Heart left ventricle (tissue), 16 donors: ENCODE measurements at regions of chr1 and their contacts with region 1.

Region 1: GRCh38 chr1:164786980-164787833 is 228.2 kb downstream of the PBX1 start:
- DNase-seq: peak; percentile 79 to 88 (median 82)
- ATAC-seq: peak; percentile 76 to 89 (median 88)
- H3K4me3 ChIP-seq: no peak overlapping the region
- H3K27ac ChIP-seq: peak overlapping the region in 7 of 12 donors; percentile 22 to 80 (median 63)
- H3K4me1 ChIP-seq: peaks cover 0 to 75% (median 33%) of the 10 kb centered on the region in 12 donors
- H3K27me3 ChIP-seq: no peaks in the 10 kb centered on the region
- CTCF ChIP-seq: peak; percentile 85 to 93 (median 90)
- POLR2A ChIP-seq: no peak

Region 2: GRCh38 chr1:164021813-164022212 is 765.4 kb before region 1 on chr1:
- intact Hi-C with region 1: no loop called
- DNase-seq: no peak
- ATAC-seq: no peak
- H3K4me3 ChIP-seq: no peak overlapping the region
- H3K27ac ChIP-seq: no peak overlapping the region
- H3K4me1 ChIP-seq: no peaks in the 10 kb centered on the region
- H3K27me3 ChIP-seq: no peaks in the 10 kb centered on the region
- CTCF ChIP-seq: no peak
- POLR2A ChIP-seq: no peak

Region 3: GRCh38 chr1:164240083-164240482 is 547.1 kb before region 1 on chr1:
- intact Hi-C with region 1: loop called in 3 of 10 experiments (anchors 5 to 10 kb)
- DNase-seq: no peak
- ATAC-seq: no peak
- H3K4me3 ChIP-seq: no peak overlapping the region
- H3K27ac ChIP-seq: no peak overlapping the region
- H3K4me1 ChIP-seq: no peaks in the 10 kb centered on the region
- H3K27me3 ChIP-seq: no peaks in the 10 kb centered on the region
- CTCF ChIP-seq: peak in 10 of 12 donors; percentile 7 to 40 (median 22)
- POLR2A ChIP-seq: no peak

Region 4: GRCh38 chr1:164440232-164440631 is 347.0 kb before region 1 on chr1:
- intact Hi-C with region 1: loop called in 8 of 10 experiments (anchors 2 to 10 kb)
- DNase-seq: peak in 4 of 5 donors; percentile 48 to 64 (median 56)
- ATAC-seq: peak; percentile 97 to 100 (median 100)
- H3K4me3 ChIP-seq: no peak overlapping the region
- H3K27ac ChIP-seq: no peak overlapping the region
- H3K4me1 ChIP-seq: peaks cover 0 to 14% (median 0%) of the 10 kb centered on the region in 12 donors
- H3K27me3 ChIP-seq: no peaks in the 10 kb centered on the region
- CTCF ChIP-seq: peak; percentile 18 to 66 (median 53)
- POLR2A ChIP-seq: no peak

Region 5: GRCh38 chr1:164617377-164618201 is 169.6 kb before region 1 on chr1:
- intact Hi-C with region 1: loop called in 9 of 10 experiments (anchors 5 to 10 kb)
- DNase-seq: no peak
- ATAC-seq: no peak
- H3K4me3 ChIP-seq: no peak overlapping the region
- H3K27ac ChIP-seq: peak overlapping the region in 2 of 12 donors; percentile 35 to 73
- H3K4me1 ChIP-seq: peaks cover 4 to 91% (median 42%) of the 10 kb centered on the region in 12 donors
- H3K27me3 ChIP-seq: no peaks in the 10 kb centered on the region
- CTCF ChIP-seq: peak; percentile 18 to 58 (median 45)
- POLR2A ChIP-seq: no peak

Region 6: GRCh38 chr1:164707868-164708331 is 79.3 kb before region 1 on chr1:
- intact Hi-C with region 1: loop called in 4 of 10 experiments (anchors 5 to 10 kb)
- DNase-seq: peak in 2 of 5 donors; percentile 60 to 62
- ATAC-seq: peak; percentile 30 to 79 (median 44)
- H3K4me3 ChIP-seq: no peak overlapping the region
- H3K27ac ChIP-seq: peak overlapping the region in 11 of 12 donors; percentile 28 to 81 (median 60)
- H3K4me1 ChIP-seq: peaks cover 3 to 94% (median 70%) of the 10 kb centered on the region in 12 donors
- H3K27me3 ChIP-seq: no peaks in the 10 kb centered on the region
- CTCF ChIP-seq: no peak
- POLR2A ChIP-seq: no peak